K562 (cell line): ENCODE measurements at regions of chr2 and their contacts with region 1.

Region 1: DNA sequence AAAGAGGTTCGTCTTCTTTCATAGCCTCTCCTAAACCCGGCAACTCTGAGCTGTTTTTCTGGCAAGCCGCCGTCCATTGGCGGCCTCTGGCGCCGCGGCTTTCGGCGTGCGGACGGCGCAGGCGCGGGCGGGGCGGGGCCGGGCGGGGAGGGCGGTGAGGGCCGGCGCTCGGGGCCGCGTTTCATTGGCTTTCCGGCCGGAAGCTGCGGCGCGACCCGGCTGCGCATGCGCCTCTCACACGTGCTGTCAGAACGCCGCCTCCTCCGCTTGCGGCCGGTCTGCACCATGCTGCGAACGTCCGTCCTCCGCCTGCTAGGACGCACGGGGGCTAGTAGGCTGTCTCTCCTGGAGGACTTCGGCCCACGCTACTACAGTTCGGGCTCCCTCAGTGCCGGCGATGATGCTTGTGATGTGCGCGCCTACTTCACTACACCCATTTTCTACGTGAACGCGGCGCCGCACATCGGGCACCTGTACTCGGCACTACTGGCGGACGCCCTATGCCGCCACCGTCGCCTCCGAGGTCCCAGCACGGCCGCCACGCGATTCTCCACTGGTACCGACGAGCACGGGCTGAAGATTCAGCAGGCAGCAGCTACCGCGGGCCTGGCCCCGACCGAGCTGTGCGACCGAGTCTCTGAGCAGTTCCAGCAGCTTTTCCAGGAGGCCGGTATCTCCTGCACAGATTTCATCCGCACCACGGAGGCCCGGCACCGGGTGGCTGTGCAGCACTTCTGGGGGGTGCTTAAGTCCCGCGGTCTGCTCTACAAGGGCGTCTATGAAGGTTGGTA is at the start of gene MARS2:
- DNase-seq: peak; percentile 87 to 93 (median 90)
- ATAC-seq: peak; percentile 87
- H3K4me3 ChIP-seq: peak within 1 kb of the TSS; percentile 88
- H3K27ac ChIP-seq: peak within 1 kb of the TSS; percentile 72
- H3K4me1 ChIP-seq: peaks cover 5 to 12% of the 10 kb centered on the region in 2 experiments; a peak in 4 of 5 replicates
- H3K27me3 ChIP-seq: no peaks in the 10 kb centered on the region
- CTCF ChIP-seq: no peak
- EP300 ChIP-seq: no peak
- POLR2A ChIP-seq: peak; percentile 83
- RAD21 ChIP-seq: no peak
- polyA plus RNA-seq, gene MARS2: 4.0 to 6.9 TPM

Region 2: DNA sequence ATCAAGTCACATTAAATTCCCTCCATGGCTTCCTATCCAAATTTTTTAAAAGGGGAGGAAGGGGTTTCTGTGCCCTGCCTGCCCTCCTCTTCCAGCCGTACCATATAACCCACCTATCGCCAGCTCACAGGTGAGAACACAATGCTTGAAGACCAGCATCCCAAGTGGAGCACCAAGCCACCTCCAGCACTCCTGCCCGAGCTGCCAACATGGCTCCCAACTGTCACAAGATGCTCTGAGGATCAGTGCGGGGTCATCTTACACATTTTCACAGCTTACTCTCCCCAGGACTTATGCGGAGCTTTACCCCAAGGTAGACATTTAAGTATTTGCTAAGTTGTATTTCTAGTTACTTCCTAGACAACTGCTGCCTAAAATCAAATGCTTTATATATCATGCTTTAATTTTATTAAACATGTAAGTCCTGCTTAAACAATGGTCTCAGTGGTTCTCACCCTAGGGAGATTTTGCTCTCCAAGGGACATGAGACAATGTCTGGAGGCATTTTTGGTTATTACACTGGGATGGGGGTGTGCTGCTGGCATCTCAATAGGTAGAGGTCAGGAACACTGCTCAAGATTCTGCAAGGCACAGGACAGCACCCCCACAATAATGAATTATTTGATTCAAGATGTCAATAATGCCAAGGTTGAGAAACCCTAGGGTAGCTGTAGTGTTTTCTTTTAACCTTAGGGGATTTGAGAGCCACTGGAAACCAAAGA is 316.3 kb before region 1 on chr2:
- CTCF ChIA-PET with region 1: no interaction called
- POLR2A ChIA-PET with region 1: no interaction called
- in situ Hi-C with region 1: no loop called
- intact Hi-C with region 1: loop called (anchors 5 kb)
- DNase-seq: no peak
- ATAC-seq: peak; percentile 44
- H3K4me3 ChIP-seq: no peak overlapping the region
- H3K27ac ChIP-seq: no peak overlapping the region
- H3K4me1 ChIP-seq: no peaks in the 10 kb centered on the region
- H3K27me3 ChIP-seq: peaks cover 0 to 4% of the 10 kb centered on the region in 2 experiments; a peak in 2 of 5 replicates
- CTCF ChIP-seq: no peak
- EP300 ChIP-seq: no peak
- POLR2A ChIP-seq: no peak
- RAD21 ChIP-seq: no peak

Region 3: GRCh38 chr2:197434541-197435513 is 270.5 kb before region 1 on chr2 and contains the start of gene SF3B1:
- CTCF ChIA-PET with region 1: no interaction called
- POLR2A ChIA-PET with region 1: interaction called, 3 read pairs
- in situ Hi-C with region 1: no loop called
- intact Hi-C with region 1: loop called (anchors 5 kb)
- DNase-seq: peak; percentile 88 to 97 (median 90)
- ATAC-seq: peak; percentile 89
- H3K4me3 ChIP-seq: peak within 1 kb of the TSS; percentile 77
- H3K27ac ChIP-seq: peak within 1 kb of the TSS; percentile 98
- H3K4me1 ChIP-seq: peaks cover 14 to 17% of the 10 kb centered on the region in 2 experiments; a peak in 4 of 5 replicates
- H3K27me3 ChIP-seq: no peaks in the 10 kb centered on the region
- CTCF ChIP-seq: no peak
- EP300 ChIP-seq: 0 out of 2 replicates have a peak, but pooled peaks have one; percentile 7
- POLR2A ChIP-seq: peak; percentile 89
- RAD21 ChIP-seq: no peak
- polyA plus RNA-seq, gene SF3B1: 125 to 177 TPM

Region 4: DNA sequence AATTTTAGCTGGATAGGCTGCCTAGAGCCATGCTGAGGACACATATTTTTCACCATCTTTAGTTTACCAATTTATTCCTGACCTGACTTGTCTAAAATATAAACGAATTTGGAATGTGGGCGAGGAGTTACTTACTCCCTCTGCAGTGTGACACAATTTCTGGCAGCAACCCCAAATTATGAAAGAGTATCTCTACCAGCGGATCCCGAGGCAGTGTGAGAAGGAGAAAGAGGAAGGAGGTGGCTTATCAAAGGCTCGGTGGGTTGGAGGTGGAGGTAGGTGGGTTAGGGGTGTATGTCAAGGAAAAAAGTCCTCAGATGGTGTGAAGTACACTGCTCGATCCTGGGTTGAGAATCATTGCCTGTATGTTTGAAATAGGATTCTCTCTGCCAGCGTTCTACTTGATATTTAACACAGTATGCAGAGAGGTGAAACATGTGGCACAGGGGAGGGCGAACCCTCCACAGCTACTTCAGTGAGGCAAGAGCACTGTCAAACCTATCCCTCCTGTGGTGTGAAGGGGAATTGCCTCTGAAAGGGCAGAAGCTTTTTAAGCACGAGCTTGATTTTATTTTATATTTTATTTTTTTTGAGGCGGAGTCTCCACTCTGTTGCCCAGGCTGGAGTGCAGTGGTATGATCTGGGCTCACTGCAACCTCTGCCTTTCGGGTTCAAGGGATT is 105.9 kb before region 1 on chr2:
- CTCF ChIA-PET with region 1: no interaction called
- POLR2A ChIA-PET with region 1: no interaction called
- in situ Hi-C with region 1: no loop called
- intact Hi-C with region 1: no loop called
- DNase-seq: peak; percentile 12 to 58 (median 32)
- ATAC-seq: peak; percentile 97
- H3K4me3 ChIP-seq: no peak overlapping the region
- H3K27ac ChIP-seq: no peak overlapping the region
- H3K4me1 ChIP-seq: peaks cover 0 to 5% of the 10 kb centered on the region in 2 experiments; a peak in 1 of 5 replicates
- H3K27me3 ChIP-seq: no peaks in the 10 kb centered on the region; a peak in 1 of 5 replicates
- CTCF ChIP-seq: peak; percentile 15 to 44 (median 42); a peak in 4 of 6 replicates
- EP300 ChIP-seq: no peak
- POLR2A ChIP-seq: no peak
- RAD21 ChIP-seq: peak in 1 of 2 experiments; percentile 34; a peak in 1 of 4 replicates

Region 5: GRCh38 chr2:198135481-198135934 is 430.2 kb after region 1 on chr2:
- CTCF ChIA-PET with region 1: no interaction called
- POLR2A ChIA-PET with region 1: no interaction called
- in situ Hi-C with region 1: no loop called
- intact Hi-C with region 1: loop called (anchors 10 kb)
- DNase-seq: no peak
- ATAC-seq: no peak
- H3K4me3 ChIP-seq: no peak overlapping the region
- H3K27ac ChIP-seq: no peak overlapping the region
- H3K4me1 ChIP-seq: no peaks in the 10 kb centered on the region; a peak in 2 of 5 replicates
- H3K27me3 ChIP-seq: no peaks in the 10 kb centered on the region
- CTCF ChIP-seq: no peak
- EP300 ChIP-seq: no peak
- POLR2A ChIP-seq: no peak
- RAD21 ChIP-seq: no peak

Region 6: DNA sequence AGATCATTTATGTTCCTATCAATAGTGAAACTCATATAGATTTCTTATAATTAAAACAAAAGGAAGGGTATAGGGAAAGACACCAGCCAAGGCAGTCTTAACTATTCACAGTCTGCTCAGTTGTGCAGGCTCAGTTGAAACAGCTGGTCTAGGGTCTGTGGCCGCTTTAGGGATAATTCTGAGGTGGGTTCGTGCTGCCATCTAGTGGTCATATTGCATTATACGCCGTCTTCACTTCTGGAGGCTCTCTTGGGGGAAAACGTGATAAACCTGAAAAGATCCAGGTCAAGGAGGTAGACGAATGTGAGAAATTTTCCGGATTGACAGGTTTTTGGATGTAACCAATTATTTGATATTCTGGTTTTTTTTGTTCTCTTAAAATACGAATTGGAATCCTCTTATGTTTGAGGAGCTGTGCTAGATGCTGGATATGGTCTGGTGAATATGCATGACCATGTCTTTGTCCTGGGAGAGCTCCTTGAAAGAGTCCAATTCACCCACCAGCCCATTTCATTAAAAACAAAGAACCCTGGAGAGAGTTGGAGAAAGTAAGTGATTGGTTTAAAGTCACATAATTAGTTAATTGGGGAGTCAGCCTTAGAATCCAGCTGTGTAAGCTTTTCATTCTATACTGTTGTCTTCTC is 591.5 kb after region 1 on chr2:
- CTCF ChIA-PET with region 1: interaction called, 3 read pairs
- POLR2A ChIA-PET with region 1: no interaction called
- in situ Hi-C with region 1: no loop called
- intact Hi-C with region 1: loop called (anchors 2 kb)
- DNase-seq: peak; percentile 53 to 76 (median 60)
- ATAC-seq: peak; percentile 96
- H3K4me3 ChIP-seq: no peak overlapping the region
- H3K27ac ChIP-seq: no peak overlapping the region
- H3K4me1 ChIP-seq: peaks cover 0 to 3% of the 10 kb centered on the region in 2 experiments; a peak in 2 of 5 replicates
- H3K27me3 ChIP-seq: peaks cover 0 to 12% of the 10 kb centered on the region in 2 experiments; a peak in 2 of 5 replicates
- CTCF ChIP-seq: peak; percentile 63 to 70 (median 64)
- EP300 ChIP-seq: no peak
- POLR2A ChIP-seq: no peak
- RAD21 ChIP-seq: peak; percentile 80 to 83